Dorsolateral prefrontal cortex (tissue), 120 donors: ENCODE measurements at regions of chr11 and their contacts with region 1.

Region 1: GRCh38 chr11:114243461-114244372 is 52.5 kb upstream of the NNMT start:
- DNase-seq: peak in 5 of 10 donors; percentile 55 to 74 (median 70)
- H3K4me3 ChIP-seq: no peak overlapping the region
- H3K27ac ChIP-seq: peak overlapping the region in 57 of 59 donors; percentile 7 to 84 (median 72)
- H3K27me3 ChIP-seq: no peaks in the 10 kb centered on the region
- CTCF ChIP-seq: no peak

Region 2: GRCh38 chr11:114135737-114136151 is 108.0 kb before region 1 on chr11:
- intact Hi-C with region 1: loop called in 1 of 2 experiments (anchors 5 kb)
- DNase-seq: peak in 1 of 10 donors; percentile 35
- H3K4me3 ChIP-seq: peak overlapping the region in 3 of 59 donors; percentile 2 to 34 (median 3)
- H3K27ac ChIP-seq: peak overlapping the region in 50 of 59 donors; percentile 1 to 94 (median 70)
- H3K27me3 ChIP-seq: no peaks in the 10 kb centered on the region
- CTCF ChIP-seq: no peak

Region 3: GRCh38 chr11:114197799-114198500 is 45.8 kb before region 1 on chr11:
- intact Hi-C with region 1: loop called in 1 of 2 experiments (anchors 5 kb)
- DNase-seq: peak in 1 of 10 donors; percentile 50
- H3K4me3 ChIP-seq: peak overlapping the region in 17 of 59 donors; percentile 0 to 34 (median 13)
- H3K27ac ChIP-seq: peak overlapping the region; percentile 1 to 91 (median 74)
- H3K27me3 ChIP-seq: no peaks in the 10 kb centered on the region
- CTCF ChIP-seq: peak in 2 of 56 donors; percentile 6 to 12